Activated naive CD4-positive, alpha-beta T cell treated with anti-CD3 and anti-CD28 coated beads for 36 hours (primary cell): ENCODE measurements at regions of chr3 and their contacts with region 1.

Region 1: GRCh38 chr3:194404365-194405140 is 5.5 kb upstream of the GP5 start:
- DNase-seq: peak; percentile 60
- H3K4me3 Mint-ChIP-seq: no peak overlapping the region
- H3K27ac Mint-ChIP-seq: no peak overlapping the region
- H3K4me1 Mint-ChIP-seq: peaks cover 9% of the 10 kb centered on the region
- H3K27me3 Mint-ChIP-seq: no peaks in the 10 kb centered on the region

Region 2: GRCh38 chr3:194296454-194297263 is 107.9 kb before region 1 on chr3:
- CTCF ChIA-PET with region 1: no interaction called
- intact Hi-C with region 1: no loop called
- DNase-seq: no peak
- H3K4me3 Mint-ChIP-seq: no peak overlapping the region
- H3K27ac Mint-ChIP-seq: no peak overlapping the region
- H3K4me1 Mint-ChIP-seq: peaks cover 3% of the 10 kb centered on the region
- H3K27me3 Mint-ChIP-seq: no peaks in the 10 kb centered on the region

Region 3: DNA sequence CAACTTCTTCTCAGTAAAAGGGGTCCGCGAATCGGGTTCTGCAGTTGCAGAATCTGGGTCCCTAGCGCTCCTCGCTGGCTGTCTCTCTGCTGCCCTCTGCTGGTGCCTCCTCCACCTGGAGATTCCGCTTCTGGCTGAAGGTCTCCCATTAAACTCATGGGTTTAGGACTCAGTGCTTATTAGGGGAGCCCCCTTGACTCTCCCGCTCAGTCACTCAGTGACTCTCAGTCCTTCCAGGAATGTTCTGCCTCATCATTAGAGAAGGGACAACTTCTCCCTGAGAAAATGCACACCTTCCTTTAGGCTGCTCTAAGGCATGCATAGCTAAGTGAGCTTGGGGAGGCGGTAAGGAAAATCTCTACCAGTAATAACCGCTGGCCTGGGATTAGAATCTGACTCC is 60.5 kb before region 1 on chr3:
- CTCF ChIA-PET with region 1: interaction called, 166 read pairs
- intact Hi-C with region 1: loop called (anchors 2 kb)
- DNase-seq: peak; percentile 81
- H3K4me3 Mint-ChIP-seq: no peak overlapping the region
- H3K27ac Mint-ChIP-seq: no peak overlapping the region
- H3K4me1 Mint-ChIP-seq: no peaks in the 10 kb centered on the region
- H3K27me3 Mint-ChIP-seq: no peaks in the 10 kb centered on the region

Region 4: GRCh38 chr3:194532591-194532990 is 128.0 kb after region 1 on chr3:
- CTCF ChIA-PET with region 1: no interaction called
- intact Hi-C with region 1: no loop called
- DNase-seq: no peak
- H3K4me3 Mint-ChIP-seq: no peak overlapping the region
- H3K27ac Mint-ChIP-seq: no peak overlapping the region
- H3K4me1 Mint-ChIP-seq: no peaks in the 10 kb centered on the region
- H3K27me3 Mint-ChIP-seq: no peaks in the 10 kb centered on the region